ENCODE measurements at regions of chr4 and their contacts with region 1.

Region 1: DNA sequence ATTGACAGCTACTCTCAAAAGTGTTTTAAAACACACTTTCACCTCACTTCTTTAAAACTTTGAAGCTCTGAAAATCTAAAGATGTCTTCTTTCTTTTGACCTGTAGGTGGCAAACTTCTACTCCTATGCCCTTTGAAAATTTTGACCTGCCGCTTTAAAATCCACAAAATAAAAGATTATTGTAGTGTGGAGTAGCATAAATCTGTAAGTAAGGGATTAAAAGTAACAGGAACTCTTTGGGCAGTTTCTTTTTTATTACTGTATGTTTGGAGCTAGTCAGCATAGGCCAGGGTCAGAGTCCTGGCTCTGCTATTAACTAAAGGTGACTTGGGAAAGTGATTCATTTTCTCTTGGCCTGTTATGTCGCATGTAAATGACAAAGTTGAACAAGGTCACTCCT is 25.5 kb downstream of the BBS12 start:
- DNase-seq: peak; percentile 26
- CTCF ChIP-seq: peak; percentile 49

Region 2: GRCh38 chr4:122434285-122434684 is 323.7 kb before region 1 on chr4:
- CTCF ChIA-PET with region 1: no interaction called
- POLR2A ChIA-PET with region 1: no interaction called
- DNase-seq: no peak
- CTCF ChIP-seq: no peak

Region 3: GRCh38 chr4:122588453-122589238 is 169.4 kb before region 1 on chr4:
- CTCF ChIA-PET with region 1: no interaction called
- POLR2A ChIA-PET with region 1: no interaction called
- DNase-seq: no peak
- CTCF ChIP-seq: no peak

Region 4: DNA sequence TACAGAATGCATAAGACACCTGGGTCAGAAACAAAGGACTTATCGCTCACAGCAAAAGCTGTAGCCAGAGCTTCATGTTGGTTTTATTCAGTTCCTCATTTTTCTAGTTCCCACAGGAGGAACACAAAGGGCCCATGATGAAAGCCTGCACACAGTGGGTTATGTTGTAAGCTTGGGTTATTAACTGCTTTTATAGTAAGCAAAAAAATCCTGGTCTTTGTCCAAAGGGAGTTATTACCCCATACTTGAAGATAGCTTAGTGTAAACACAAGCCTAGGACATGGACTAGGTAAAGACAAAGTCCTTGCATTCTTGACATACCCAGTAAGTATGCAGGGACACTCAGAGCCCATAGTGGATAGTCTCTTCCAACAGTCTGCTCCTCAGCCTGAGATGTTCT is 13.8 kb before region 1 on chr4:
- CTCF ChIA-PET with region 1: interaction called, 38 read pairs
- POLR2A ChIA-PET with region 1: no interaction called
- DNase-seq: no peak
- CTCF ChIP-seq: no peak

Region 5: DNA sequence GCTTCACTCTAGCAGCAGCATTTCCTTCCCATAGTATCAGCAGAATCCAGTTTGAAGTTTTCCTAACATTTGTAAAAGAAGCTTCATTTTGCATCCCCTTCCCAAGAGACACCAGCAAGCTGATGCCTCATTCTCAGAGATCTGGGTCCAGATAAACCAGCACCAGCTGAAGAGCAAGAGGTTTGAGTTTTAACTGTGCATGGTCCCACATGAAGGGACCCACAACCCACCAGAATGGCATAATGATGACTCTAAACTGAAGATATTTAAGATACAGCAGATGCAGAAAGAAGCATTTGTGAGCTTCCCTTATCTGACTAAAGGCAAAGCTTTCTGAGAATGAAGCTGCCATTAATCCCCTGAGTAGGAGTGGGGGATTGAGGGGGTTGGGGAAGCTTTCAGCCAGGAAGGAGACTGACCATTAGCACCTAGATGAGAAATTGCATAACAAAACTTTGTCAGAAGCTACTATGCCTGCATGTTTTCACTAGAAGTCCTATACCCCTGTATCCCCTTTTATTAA is 145.8 kb after region 1 on chr4:
- CTCF ChIA-PET with region 1: interaction called, 11 read pairs
- POLR2A ChIA-PET with region 1: no interaction called
- DNase-seq: no peak
- CTCF ChIP-seq: no peak

Region 6: DNA sequence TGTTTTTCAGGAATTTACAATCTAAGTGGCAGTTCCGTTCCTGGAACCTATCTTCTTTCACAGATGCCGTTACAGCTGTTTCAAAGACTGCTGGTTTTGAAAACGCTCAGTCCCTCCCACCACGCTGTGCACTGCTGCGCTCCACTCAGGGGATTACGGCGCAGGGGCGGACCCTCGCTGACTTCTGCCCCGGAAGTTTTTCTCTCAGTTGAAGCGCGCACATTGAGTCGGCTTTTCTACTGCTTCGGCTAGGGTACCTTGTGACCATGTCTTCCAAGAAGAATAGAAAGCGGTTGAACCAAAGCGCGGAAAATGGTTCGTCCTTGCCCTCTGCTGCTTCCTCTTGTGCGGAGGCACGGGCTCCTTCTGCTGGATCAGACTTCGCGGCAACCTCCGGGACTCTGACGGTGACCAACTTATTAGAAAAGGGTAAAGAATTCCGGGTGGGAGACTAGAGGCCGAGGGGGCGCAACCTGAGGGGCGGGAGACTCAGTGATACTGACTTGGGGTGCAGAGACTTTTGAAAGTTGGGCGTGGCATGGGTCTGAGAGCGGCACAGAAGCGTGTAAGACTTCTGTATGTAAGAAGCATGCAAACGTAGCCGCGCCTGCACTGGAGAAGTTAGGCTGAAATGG is 165.0 kb after region 1 on chr4:
- CTCF ChIA-PET with region 1: interaction called, 25 read pairs
- POLR2A ChIA-PET with region 1: no interaction called
- DNase-seq: peak; percentile 86
- CTCF ChIP-seq: no peak